ENCODE measurements at regions of chr4 and their contacts with region 1.

Region 1: GRCh38 chr4:83110223-83110945 is 4.1 kb downstream of the PLAC8 start:
- DNase-seq: peak; percentile 72
- H3K4me3 ChIP-seq: peak overlapping the region; percentile 55 to 60 (median 57)
- H3K27ac ChIP-seq: peak overlapping the region; percentile 48
- H3K4me1 ChIP-seq: peaks cover 32% of the 10 kb centered on the region
- H3K27me3 ChIP-seq: no peaks in the 10 kb centered on the region
- CTCF ChIP-seq: peak; percentile 64 to 88

Region 2: DNA sequence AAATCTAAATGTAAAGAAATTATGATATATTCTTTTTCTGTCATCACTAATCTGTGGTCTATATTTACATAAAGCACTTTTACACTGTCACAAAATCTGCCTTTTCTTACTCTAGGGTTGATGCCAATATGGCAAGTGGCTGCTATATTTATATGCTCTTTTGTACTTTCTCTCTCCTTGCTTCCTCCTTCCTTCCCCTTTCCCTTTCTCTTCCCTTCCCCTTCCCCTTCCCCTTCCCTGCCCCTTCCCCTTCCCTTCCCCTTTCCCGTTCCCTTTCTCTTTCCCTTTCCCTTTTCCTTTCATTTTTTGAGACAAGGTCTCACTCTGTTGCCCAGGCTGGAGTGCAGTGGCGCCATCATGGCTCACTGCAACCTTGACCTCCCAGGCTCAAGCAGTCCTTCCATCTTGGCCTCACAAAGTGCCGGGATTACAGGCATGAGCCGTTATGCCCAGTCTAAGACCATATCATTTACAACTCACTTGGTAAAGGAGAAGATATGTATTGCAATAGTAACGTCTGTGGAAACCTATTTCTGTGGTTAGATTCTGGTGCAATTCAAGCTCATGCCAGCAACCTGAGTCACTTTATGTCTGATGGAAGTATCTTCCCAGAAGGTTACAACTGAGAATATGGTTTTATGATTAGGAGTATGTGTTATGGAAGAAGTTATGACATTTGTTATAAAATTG is 18.0 kb after region 1 on chr4:
- CTCF ChIA-PET with region 1: no interaction called
- dilution Hi-C with region 1: no loop called
- in situ Hi-C with region 1: no loop called
- intact Hi-C with region 1: loop called (anchors 2 kb)
- DNase-seq: peak; percentile 86
- H3K4me3 ChIP-seq: no peak overlapping the region
- H3K27ac ChIP-seq: no peak overlapping the region
- H3K4me1 ChIP-seq: peaks cover 11% of the 10 kb centered on the region
- H3K27me3 ChIP-seq: no peaks in the 10 kb centered on the region
- CTCF ChIP-seq: no peak

Region 3: GRCh38 chr4:83174844-83175414 is 64.5 kb after region 1 on chr4:
- CTCF ChIA-PET with region 1: no interaction called
- dilution Hi-C with region 1: no loop called
- in situ Hi-C with region 1: no loop called
- intact Hi-C with region 1: loop called (anchors 5 kb)
- DNase-seq: no peak
- H3K4me3 ChIP-seq: no peak overlapping the region
- H3K27ac ChIP-seq: no peak overlapping the region
- H3K4me1 ChIP-seq: peaks cover 12% of the 10 kb centered on the region
- H3K27me3 ChIP-seq: no peaks in the 10 kb centered on the region
- CTCF ChIP-seq: no peak

Region 4: GRCh38 chr4:83212041-83212851 is 101.9 kb after region 1 on chr4:
- CTCF ChIA-PET with region 1: no interaction called
- dilution Hi-C with region 1: loop called (anchors 5 kb)
- in situ Hi-C with region 1: no loop called
- intact Hi-C with region 1: no loop called
- DNase-seq: peak; percentile 74
- H3K4me3 ChIP-seq: no peak overlapping the region
- H3K27ac ChIP-seq: peak overlapping the region; percentile 37
- H3K4me1 ChIP-seq: peaks cover 41% of the 10 kb centered on the region
- H3K27me3 ChIP-seq: no peaks in the 10 kb centered on the region
- CTCF ChIP-seq: no peak

Region 5: GRCh38 chr4:83217721-83218522 is 107.5 kb after region 1 on chr4:
- CTCF ChIA-PET with region 1: no interaction called
- dilution Hi-C with region 1: loop called (anchors 5 kb)
- in situ Hi-C with region 1: no loop called
- intact Hi-C with region 1: loop called (anchors 1 kb)
- DNase-seq: no peak
- H3K4me3 ChIP-seq: no peak overlapping the region
- H3K27ac ChIP-seq: no peak overlapping the region
- H3K4me1 ChIP-seq: peaks cover 19% of the 10 kb centered on the region
- H3K27me3 ChIP-seq: no peaks in the 10 kb centered on the region
- CTCF ChIP-seq: no peak